ENCODE measurements at regions of chr2 and their contacts with region 1.

Region 1: GRCh38 chr2:231604685-231605606 is 12.3 kb downstream of the TEX44 start:
- DNase-seq: peak; percentile 69
- H3K4me3 ChIP-seq: peak overlapping the region; percentile 37 to 75 (median 46)
- H3K27ac ChIP-seq: peak overlapping the region; percentile 91 to 97 (median 94)
- H3K4me1 ChIP-seq: peaks cover 28 to 68% (median 30%) of the 10 kb centered on the region in 3 donors
- H3K27me3 ChIP-seq: no peaks in the 10 kb centered on the region
- CTCF ChIP-seq: no peak
- POLR2A ChIP-seq: peak in 2 of 4 donors; percentile 37 to 61

Region 2: DNA sequence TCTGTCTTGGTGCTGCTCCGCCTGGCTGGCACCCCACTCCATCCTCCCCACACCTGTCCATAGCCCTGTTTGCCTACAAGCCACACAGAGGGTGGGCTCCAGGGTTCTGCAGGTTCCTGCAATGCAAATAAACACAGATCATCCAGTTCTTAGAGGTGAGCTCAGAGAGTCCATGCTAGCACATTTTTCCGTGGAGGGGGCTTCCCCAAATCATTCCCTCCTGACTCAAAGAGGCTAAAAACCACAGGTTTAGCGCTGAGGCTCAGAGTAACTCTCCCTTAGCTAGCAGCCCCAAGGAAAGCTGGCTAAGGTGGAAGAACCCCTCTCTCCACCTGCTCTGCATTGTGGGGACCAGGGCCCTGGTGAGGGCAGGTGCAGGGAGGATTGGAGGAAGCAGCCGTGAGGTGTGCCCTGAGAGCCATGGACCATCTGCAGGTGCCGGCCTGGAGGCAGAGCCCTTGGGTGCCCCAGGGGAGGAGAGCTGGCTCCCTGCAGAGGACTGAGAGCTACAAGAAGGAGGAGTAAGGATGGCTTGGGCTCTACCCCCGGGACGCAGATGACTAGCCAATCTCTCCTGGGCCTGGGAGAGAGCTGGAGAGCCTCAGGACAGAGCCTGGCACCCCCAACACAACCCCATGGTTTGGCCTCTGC is 36.0 kb before region 1 on chr2:
- intact Hi-C with region 1: loop called (anchors 5 kb)
- DNase-seq: no peak
- H3K4me3 ChIP-seq: no peak overlapping the region
- H3K27ac ChIP-seq: no peak overlapping the region
- H3K4me1 ChIP-seq: peaks cover 0 to 14% (median 8%) of the 10 kb centered on the region in 3 donors
- H3K27me3 ChIP-seq: no peaks in the 10 kb centered on the region
- CTCF ChIP-seq: no peak
- POLR2A ChIP-seq: no peak

Measured in esophagus squamous epithelium (tissue), 5 donors.